ENCODE measurements at regions of chr2 and their contacts with region 1.

Region 1: GRCh38 chr2:65576861-65577601 is 144.6 kb upstream of the SPRED2 start:
- DNase-seq: no peak
- H3K4me3 ChIP-seq: peak overlapping the region in 1 of 2 experiments; percentile 42; a peak in 1 of 4 replicates
- H3K27ac ChIP-seq: peak overlapping the region; percentile 59 to 97; a peak in 3 of 4 replicates
- H3K4me1 ChIP-seq: peaks cover 0 to 16% of the 10 kb centered on the region in 2 experiments; a peak in 2 of 4 replicates
- H3K27me3 ChIP-seq: no peaks in the 10 kb centered on the region
- CTCF ChIP-seq: no peak
- EP300 ChIP-seq: peak in 1 of 2 experiments; percentile 67; a peak in 1 of 4 replicates
- RAD21 ChIP-seq: no peak

Region 2: DNA sequence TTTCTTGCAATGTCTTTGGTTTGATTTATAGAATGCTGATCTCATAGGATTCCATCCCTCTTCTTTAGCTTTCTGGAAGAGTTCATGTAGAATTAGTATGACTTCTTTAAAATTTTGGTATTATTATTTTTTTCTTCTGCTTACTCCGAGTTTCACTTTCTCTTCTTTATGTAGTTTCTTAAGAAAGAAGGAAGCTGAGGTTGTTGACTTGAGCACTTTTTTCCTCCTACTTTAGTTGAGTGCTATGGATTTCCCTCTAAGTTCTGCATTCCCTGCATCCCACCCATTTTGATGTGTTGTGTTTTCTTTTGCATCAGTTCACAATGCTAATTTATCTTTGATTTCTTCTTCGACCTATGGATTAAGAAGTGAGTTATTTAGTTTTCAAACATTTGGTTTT is 65.7 kb before region 1 on chr2:
- CTCF ChIA-PET with region 1: no interaction called
- POLR2A ChIA-PET with region 1: no interaction called
- DNase-seq: no peak
- H3K4me3 ChIP-seq: no peak overlapping the region
- H3K27ac ChIP-seq: no peak overlapping the region
- H3K4me1 ChIP-seq: no peaks in the 10 kb centered on the region
- H3K27me3 ChIP-seq: no peaks in the 10 kb centered on the region
- CTCF ChIP-seq: no peak
- EP300 ChIP-seq: no peak
- RAD21 ChIP-seq: no peak

Region 3: DNA sequence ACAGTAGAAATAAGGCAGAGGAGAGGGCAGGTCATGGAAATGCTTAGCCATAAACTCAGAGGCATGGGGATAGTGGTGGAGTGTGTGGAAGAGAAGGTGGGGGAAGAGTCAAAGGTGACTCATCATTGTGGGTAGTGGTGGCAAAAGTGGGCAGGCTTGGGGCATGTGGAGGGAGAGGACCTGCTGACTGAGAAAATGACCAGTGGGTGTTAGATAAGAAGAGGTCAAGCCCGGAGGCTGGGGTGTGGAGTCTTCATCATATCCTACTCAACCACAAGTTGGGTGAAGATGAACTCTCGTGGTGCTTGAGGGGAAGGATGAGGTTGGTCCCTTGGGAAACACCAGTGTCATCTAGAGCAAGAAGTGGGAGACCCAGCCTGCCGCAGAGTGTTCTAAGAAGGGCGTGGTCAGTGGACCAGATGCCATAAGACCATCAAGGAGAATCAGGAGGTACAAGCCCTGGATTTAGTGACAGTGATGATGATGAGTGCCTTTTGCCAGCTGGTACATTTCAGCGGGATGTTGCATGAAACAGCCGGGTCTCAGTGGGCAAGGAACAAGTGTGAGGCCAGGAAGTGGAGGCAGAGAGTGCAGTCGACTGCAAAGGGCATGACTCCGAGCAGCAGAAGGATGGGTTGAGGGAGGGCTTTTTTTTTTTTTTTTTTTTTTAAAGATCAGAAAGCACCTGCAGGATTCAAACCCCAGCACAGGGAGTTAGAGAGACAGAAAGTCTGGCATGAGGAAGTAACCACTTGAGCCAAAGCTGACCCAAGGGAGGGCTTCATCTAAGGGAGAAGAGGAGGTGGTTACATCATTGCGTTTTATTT is 22.1 kb before region 1 on chr2:
- CTCF ChIA-PET with region 1: interaction called, 10 read pairs
- POLR2A ChIA-PET with region 1: no interaction called
- DNase-seq: no peak
- H3K4me3 ChIP-seq: no peak overlapping the region
- H3K27ac ChIP-seq: no peak overlapping the region
- H3K4me1 ChIP-seq: peaks cover 0 to 3% of the 10 kb centered on the region in 2 experiments; a peak in 1 of 4 replicates
- H3K27me3 ChIP-seq: no peaks in the 10 kb centered on the region
- CTCF ChIP-seq: no peak
- EP300 ChIP-seq: no peak
- RAD21 ChIP-seq: no peak

Measured in SK-N-SH (cell line).